ENCODE measurements at regions of chr17 and their contacts with region 1.

Region 1: GRCh38 chr17:70875729-70876310 is 706.5 kb downstream of the KCNJ2 start:
- DNase-seq: no peak
- H3K4me3 Mint-ChIP-seq: no peak overlapping the region
- H3K27ac Mint-ChIP-seq: no peak overlapping the region
- H3K4me1 Mint-ChIP-seq: no peaks in the 10 kb centered on the region
- H3K27me3 Mint-ChIP-seq: no peaks in the 10 kb centered on the region

Region 2: DNA sequence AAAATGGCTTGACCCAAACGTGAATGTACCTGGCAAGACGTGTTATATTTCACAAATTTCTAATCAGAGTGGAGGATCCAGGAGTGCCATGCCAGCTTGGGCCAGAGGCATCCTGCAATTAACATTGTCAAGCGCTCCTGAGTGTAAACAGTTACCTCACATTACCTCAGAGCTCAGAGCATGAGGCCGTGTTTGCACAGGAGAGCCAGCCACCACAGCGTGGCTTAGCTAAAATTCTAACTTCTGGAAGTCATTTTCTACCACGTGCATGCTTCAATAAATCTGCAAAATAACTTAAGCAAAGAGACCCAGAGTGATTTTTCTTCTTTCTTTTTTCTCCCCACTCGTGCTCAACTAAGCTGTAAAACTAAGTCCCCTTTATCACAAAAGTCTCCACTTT is 62.5 kb after region 1 on chr17:
- intact Hi-C with region 1: loop called (anchors 10 kb)
- DNase-seq: no peak
- H3K4me3 Mint-ChIP-seq: no peak overlapping the region
- H3K27ac Mint-ChIP-seq: no peak overlapping the region
- H3K4me1 Mint-ChIP-seq: no peaks in the 10 kb centered on the region
- H3K27me3 Mint-ChIP-seq: no peaks in the 10 kb centered on the region